GM18951 (cell line): ENCODE measurements at regions of chr1 and their contacts with region 1.

Region 1: DNA sequence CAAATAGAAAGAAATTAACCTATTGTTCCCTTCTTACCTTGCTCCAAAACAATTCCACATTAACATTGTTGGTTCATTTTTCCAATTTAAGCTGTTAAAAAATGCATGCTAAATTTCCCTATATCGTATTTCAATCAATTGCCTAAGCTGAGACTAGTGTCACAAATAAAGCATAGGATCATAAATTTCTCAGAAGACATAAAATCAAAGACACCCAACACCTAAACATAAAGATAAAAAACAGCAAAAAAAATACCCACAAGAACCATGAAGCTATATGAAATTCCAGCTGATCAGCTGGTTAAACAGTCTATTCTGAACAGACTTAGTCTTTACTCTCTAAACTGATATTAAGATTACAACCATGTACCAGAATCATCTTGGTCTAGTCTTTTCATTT is 32.3 kb downstream of the ACBD6 start:
- POLR2A ChIP-seq: no peak

Region 2: DNA sequence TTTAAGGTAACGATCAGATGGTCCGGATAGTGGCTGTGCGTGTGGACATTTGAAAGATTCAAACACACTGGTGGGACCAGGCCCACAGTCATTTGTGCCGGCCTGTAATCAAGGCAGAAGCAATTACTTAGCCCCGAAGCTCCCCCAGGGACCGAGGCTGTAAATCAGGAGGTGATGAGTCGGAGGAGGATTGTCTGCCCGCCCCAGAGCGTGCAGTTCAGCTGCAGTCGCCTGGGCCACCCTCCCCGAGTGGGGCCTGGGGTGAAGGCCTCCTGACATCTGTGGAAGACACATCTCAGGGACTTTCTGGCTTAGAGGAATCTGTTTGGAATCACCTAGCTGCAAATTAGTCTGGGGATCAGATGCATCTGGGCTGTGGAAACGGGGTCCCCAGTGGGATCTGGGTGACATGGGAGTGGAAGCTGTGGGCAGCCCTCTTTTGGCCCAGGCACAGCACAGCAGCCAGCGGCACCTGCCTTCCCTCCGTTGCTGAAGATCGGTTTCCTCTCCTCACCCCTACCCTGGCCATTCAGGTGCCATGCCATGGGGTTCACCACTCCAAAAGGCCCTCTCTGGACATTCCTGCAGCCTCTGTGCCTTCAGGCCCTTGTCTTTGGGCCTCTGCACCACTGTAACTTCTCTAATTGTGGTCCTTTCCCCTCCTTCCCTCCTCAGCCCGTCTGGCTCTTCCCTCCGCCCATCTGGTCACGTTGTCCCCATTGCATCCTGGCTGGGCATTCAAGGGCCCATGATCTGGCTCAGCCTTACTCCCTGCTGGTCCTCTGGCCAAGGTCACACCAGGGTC is 214.3 kb before region 1 on chr1:
- in situ Hi-C with region 1: loop called (anchors 5 kb)
- POLR2A ChIP-seq: no peak